ENCODE measurements at regions of chr9 and their contacts with region 1.

Region 1: GRCh38 chr9:105069696-105070095 is 141.7 kb upstream of the ABCA1 start:
- DNase-seq: peak in 1 of 2 experiments; percentile 59
- H3K4me3 ChIP-seq: no peak overlapping the region
- H3K27ac ChIP-seq: peak overlapping the region; percentile 89
- H3K4me1 ChIP-seq: peaks cover 44% of the 10 kb centered on the region
- H3K27me3 ChIP-seq: no peaks in the 10 kb centered on the region
- CTCF ChIP-seq: no peak

Region 2: GRCh38 chr9:105007143-105007542 is 62.6 kb before region 1 on chr9:
- CTCF ChIA-PET with region 1: no interaction called
- POLR2A ChIA-PET with region 1: no interaction called
- intact Hi-C with region 1: no loop called
- DNase-seq: peak; percentile 39 to 94
- H3K4me3 ChIP-seq: peak overlapping the region; percentile 16; the same call in 1 of the 2 replicates
- H3K27ac ChIP-seq: peak overlapping the region; percentile 92
- H3K4me1 ChIP-seq: peaks cover 32% of the 10 kb centered on the region
- H3K27me3 ChIP-seq: no peaks in the 10 kb centered on the region
- CTCF ChIP-seq: no peak

Region 3: DNA sequence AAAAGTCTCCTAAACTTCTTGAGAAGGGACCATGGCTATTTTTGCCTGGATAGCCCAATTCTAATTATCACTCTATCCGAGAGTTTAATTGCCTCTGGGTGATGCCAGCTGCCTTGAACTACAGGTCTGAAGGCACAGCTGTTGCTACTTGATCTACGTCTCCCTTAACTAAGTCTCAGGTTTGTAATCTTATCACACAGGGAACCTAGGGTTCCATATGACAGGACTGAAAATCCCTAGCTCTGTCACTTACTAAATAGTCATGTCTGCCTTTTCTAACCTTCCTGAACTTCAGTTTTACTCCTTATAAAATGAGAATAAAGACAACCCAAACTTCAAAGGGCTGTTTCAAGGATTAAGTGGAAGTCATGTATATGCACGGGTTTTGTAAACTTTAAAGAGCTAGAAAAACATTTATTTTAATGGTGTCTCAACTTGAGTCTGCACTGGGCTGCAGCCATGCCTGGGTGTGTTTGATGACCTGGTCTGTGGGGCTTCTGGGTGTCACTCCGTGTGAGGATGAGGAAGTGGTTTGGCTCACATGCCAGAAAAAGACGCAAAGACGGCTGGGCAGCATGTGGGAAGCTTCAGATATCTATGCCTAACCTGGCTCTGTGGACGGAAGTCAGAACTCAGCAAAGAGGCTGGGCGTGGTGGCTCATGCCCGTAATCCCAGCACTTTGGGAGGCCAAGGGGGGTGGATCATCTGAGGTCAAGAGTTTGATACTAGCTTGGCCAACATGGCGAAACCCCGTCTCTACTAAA is 45.5 kb after region 1 on chr9:
- CTCF ChIA-PET with region 1: no interaction called
- POLR2A ChIA-PET with region 1: no interaction called
- intact Hi-C with region 1: loop called (anchors 5 kb)
- DNase-seq: peak in 1 of 2 experiments; percentile 44
- H3K4me3 ChIP-seq: no peak overlapping the region
- H3K27ac ChIP-seq: peak overlapping the region; percentile 66; the same call in 1 of the 2 replicates
- H3K4me1 ChIP-seq: peaks cover 36% of the 10 kb centered on the region
- H3K27me3 ChIP-seq: no peaks in the 10 kb centered on the region
- CTCF ChIP-seq: no peak

Region 4: DNA sequence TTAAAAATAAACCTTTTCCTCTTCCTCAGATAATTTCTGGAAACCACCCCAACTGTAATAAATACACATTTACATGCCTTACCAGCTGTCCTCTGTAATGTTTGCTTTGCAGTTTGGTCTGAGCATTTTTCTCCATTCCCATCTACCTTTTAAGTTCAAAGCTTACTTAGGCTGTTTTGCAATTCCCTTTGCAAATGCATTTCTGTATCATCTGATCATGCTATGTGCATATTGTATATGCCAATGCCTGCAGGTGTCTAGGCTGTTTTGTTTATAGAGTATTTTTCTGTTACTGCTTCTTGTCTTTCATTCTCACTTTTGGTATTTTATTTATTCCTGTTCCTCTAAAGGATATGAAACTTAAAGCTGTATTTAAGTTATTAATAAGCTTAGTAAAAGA is 261.1 kb after region 1 on chr9:
- CTCF ChIA-PET with region 1: no interaction called
- POLR2A ChIA-PET with region 1: no interaction called
- intact Hi-C with region 1: no loop called
- DNase-seq: no peak
- H3K4me3 ChIP-seq: no peak overlapping the region
- H3K27ac ChIP-seq: no peak overlapping the region
- H3K4me1 ChIP-seq: no peaks in the 10 kb centered on the region
- H3K27me3 ChIP-seq: no peaks in the 10 kb centered on the region
- CTCF ChIP-seq: no peak